ENCODE measurements at regions of chr3 and their contacts with region 1.

Region 1: GRCh38 chr3:42025370-42026138 is 63.7 kb upstream of the ULK4 start:
- DNase-seq: peak; percentile 97 to 98
- ATAC-seq: peak; percentile 95 to 98
- H3K4me3 ChIP-seq: peak overlapping the region in 3 of 4 donors; percentile 10 to 41 (median 31)
- H3K27ac ChIP-seq: peak overlapping the region; percentile 88 to 98 (median 92)
- H3K4me1 ChIP-seq: peaks cover 63 to 67% of the 10 kb centered on the region in 2 donors
- H3K27me3 ChIP-seq: no peaks in the 10 kb centered on the region
- CTCF ChIP-seq: no peak
- POLR2A ChIP-seq: peak; percentile 54 to 58

Region 2: GRCh38 chr3:40731445-40731844 is 1294.1 kb before region 1 on chr3:
- in situ Hi-C with region 1: no loop called
- intact Hi-C with region 1: no loop called
- DNase-seq: no peak
- ATAC-seq: no peak
- H3K4me3 ChIP-seq: no peak overlapping the region
- H3K27ac ChIP-seq: no peak overlapping the region
- H3K4me1 ChIP-seq: no peaks in the 10 kb centered on the region
- H3K27me3 ChIP-seq: no peaks in the 10 kb centered on the region
- CTCF ChIP-seq: no peak
- POLR2A ChIP-seq: no peak

Region 3: GRCh38 chr3:41881233-41881821 is 144.2 kb before region 1 on chr3:
- in situ Hi-C with region 1: no loop called
- intact Hi-C with region 1: no loop called
- DNase-seq: no peak
- ATAC-seq: no peak
- H3K4me3 ChIP-seq: no peak overlapping the region
- H3K27ac ChIP-seq: no peak overlapping the region
- H3K4me1 ChIP-seq: no peaks in the 10 kb centered on the region
- H3K27me3 ChIP-seq: no peaks in the 10 kb centered on the region
- CTCF ChIP-seq: peak; percentile 52 to 73 (median 67)
- POLR2A ChIP-seq: no peak

Region 4: GRCh38 chr3:41961750-41962679 is 63.5 kb before region 1 on chr3 and contains the start of gene ULK4:
- in situ Hi-C with region 1: no loop called
- intact Hi-C with region 1: no loop called
- DNase-seq: peak; percentile 96
- ATAC-seq: peak; percentile 98 to 99
- H3K4me3 ChIP-seq: peak within 1 kb of the TSS; percentile 71 to 95 (median 84)
- H3K27ac ChIP-seq: peak within 1 kb of the TSS; percentile 49 to 79 (median 74)
- H3K4me1 ChIP-seq: peaks cover 0 to 9% of the 10 kb centered on the region in 2 donors
- H3K27me3 ChIP-seq: no peaks in the 10 kb centered on the region
- CTCF ChIP-seq: no peak
- POLR2A ChIP-seq: peak in 1 of 2 donors; percentile 14
- total RNA-seq, gene ULK4: 2.0 to 3.0 (median 2.3) TPM

Region 5: DNA sequence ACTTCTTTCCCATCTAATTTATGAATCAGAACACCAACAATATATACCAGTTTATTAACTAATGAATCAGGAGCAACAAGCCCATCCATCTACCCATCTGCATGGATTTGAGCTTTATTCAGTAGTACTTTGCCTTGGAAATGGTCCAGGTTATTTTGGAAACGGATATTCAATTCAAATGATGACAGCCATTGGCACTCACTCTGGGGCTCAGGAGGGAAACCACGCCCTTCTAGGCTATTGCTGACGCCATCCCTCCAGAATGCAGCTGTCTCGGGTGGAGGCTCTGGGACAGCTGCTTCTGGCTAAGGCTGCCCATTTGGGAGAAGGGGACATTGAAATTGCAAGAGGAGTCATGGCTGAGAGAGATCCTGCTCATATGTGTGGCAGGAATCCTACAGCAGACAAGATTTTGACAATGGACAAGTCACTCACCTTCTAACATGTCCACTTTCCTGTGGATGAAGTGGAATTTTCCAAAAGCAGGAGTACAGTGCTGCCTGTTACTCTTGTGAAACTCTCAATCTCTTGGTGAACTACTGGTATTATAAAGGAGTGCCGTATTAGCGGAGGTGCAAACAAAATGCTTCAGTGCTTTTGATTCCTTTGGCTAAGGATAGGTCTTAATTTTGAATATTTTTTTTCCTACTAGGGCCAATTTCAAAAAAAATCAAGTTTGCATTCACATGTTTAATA is 36.3 kb after region 1 on chr3:
- in situ Hi-C with region 1: no loop called
- intact Hi-C with region 1: loop called (anchors 1 kb)
- DNase-seq: peak; percentile 88 to 94
- ATAC-seq: peak; percentile 92 to 93
- H3K4me3 ChIP-seq: peak overlapping the region in 3 of 4 donors; percentile 17 to 41 (median 23)
- H3K27ac ChIP-seq: peak overlapping the region; percentile 88 to 94 (median 90)
- H3K4me1 ChIP-seq: peaks cover 84 to 85% of the 10 kb centered on the region in 2 donors
- H3K27me3 ChIP-seq: no peaks in the 10 kb centered on the region
- CTCF ChIP-seq: no peak
- POLR2A ChIP-seq: peak; percentile 27 to 61

Region 6: DNA sequence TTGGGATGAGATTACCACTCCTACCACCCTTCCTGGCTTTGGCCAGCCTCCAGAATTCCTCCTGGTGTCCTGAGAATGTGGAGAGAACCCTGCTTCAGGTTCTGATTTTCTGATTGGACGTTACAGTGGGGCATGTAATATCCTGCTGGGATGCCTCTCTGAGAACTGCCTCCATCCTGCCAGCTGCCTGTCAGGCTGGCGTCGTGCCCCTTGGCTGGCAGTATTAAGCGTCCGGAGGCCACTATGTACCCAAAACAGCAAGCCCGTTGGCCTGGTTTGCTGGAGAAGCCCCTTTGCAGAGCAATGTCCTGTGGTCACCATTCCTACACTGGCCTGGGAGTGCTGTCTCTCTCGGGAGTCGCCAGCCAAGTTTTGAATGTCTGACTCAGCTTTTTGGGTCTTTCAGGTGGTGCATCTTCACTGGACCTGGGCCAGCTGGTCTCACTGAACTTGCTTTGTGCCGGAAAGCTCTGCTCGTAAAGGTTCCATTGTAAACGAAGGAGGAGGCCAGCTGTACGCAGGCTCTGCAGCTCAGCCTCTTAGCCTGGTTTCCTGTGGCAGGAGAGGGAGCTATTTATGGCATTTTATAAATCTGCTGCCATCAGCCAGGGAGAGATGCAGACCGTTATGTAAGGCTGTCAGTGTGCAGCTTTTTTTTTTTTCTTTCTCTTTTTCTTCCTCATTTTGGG is 46.5 kb after region 1 on chr3:
- in situ Hi-C with region 1: loop called in 1 of 4 experiments (anchors 10 kb)
- intact Hi-C with region 1: no loop called
- DNase-seq: peak; percentile 74 to 84
- ATAC-seq: peak; percentile 82 to 90
- H3K4me3 ChIP-seq: peak overlapping the region; percentile 30 to 51 (median 42)
- H3K27ac ChIP-seq: peak overlapping the region; percentile 81 to 94 (median 90)
- H3K4me1 ChIP-seq: peaks cover 68 to 70% of the 10 kb centered on the region in 2 donors
- H3K27me3 ChIP-seq: no peaks in the 10 kb centered on the region
- CTCF ChIP-seq: no peak
- POLR2A ChIP-seq: no peak

Region 7: DNA sequence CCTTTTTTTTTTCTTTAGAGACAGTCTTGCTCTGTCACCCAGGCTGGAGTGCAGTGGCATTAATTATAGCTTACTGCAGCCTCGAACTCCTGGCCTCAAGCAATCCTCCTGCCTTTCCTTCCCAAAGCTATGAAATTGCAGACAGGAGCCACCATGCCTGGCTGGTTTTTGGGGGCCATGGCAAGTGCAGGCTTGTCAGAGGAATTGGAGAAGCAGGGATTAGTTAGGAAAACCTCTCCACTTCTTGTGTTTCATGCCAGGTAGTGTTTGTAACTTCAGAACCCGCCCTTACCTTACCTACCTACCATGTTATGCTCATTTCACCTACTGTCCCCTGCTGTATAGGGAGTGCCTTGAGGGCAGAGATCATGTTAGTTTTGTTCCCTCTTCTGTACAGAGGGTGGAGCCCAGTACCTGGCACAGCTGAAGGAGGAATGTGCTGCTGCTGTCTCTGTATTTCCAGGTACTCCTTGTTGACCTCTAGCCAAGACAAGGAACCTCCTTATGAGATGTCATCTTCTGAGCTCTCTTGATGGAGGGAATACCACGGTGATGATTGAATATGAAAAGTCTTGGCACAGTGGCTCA is 109.4 kb after region 1 on chr3:
- in situ Hi-C with region 1: no loop called
- intact Hi-C with region 1: no loop called
- DNase-seq: no peak
- ATAC-seq: peak in 1 of 2 donors; percentile 55
- H3K4me3 ChIP-seq: no peak overlapping the region
- H3K27ac ChIP-seq: peak overlapping the region in 1 of 4 donors; percentile 53
- H3K4me1 ChIP-seq: peaks cover 8 to 15% of the 10 kb centered on the region in 2 donors
- H3K27me3 ChIP-seq: no peaks in the 10 kb centered on the region
- CTCF ChIP-seq: no peak
- POLR2A ChIP-seq: no peak

Region 8: DNA sequence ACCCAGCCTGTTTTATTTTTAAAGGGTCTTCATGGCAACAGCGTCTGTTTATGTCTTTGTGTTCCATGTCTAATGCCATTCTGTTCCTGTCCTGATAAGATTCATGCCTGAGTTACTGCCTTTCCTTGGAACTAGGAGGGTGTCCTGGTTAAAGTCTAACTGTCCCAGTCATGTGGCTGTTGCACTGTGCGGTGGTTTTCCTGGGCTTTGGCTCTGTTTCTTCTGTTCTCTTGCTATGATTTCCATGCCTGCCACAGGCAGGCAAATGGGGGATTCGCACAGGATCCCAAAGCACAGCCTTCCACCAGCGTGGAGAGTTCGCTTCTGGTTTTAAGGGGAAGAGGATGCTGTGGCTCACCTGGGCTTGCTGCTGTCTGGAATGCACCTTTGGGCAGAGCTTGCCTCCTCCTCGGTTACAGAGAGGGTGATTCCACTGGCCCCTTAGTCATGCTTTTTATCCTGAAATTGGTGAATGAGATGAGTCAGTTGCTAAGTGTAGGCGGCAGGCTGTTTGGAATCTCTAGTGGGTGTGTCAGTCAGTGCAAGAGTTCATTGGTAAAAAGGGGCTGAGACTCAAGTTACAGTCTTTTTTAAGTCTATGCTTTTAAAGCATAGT is 153.7 kb after region 1 on chr3:
- in situ Hi-C with region 1: loop called in 2 of 4 experiments (anchors 25 kb)
- intact Hi-C with region 1: loop called (anchors 5 kb)
- DNase-seq: peak; percentile 61 to 81
- ATAC-seq: peak; percentile 98 to 99
- H3K4me3 ChIP-seq: no peak overlapping the region
- H3K27ac ChIP-seq: peak overlapping the region; percentile 81 to 89 (median 86)
- H3K4me1 ChIP-seq: peaks cover 69 to 76% of the 10 kb centered on the region in 2 donors
- H3K27me3 ChIP-seq: no peaks in the 10 kb centered on the region
- CTCF ChIP-seq: no peak
- POLR2A ChIP-seq: no peak

Measured in gastrocnemius medialis (tissue), 4 donors.